ENCODE measurements at regions of chr10 and their contacts with region 1.

Region 1: DNA sequence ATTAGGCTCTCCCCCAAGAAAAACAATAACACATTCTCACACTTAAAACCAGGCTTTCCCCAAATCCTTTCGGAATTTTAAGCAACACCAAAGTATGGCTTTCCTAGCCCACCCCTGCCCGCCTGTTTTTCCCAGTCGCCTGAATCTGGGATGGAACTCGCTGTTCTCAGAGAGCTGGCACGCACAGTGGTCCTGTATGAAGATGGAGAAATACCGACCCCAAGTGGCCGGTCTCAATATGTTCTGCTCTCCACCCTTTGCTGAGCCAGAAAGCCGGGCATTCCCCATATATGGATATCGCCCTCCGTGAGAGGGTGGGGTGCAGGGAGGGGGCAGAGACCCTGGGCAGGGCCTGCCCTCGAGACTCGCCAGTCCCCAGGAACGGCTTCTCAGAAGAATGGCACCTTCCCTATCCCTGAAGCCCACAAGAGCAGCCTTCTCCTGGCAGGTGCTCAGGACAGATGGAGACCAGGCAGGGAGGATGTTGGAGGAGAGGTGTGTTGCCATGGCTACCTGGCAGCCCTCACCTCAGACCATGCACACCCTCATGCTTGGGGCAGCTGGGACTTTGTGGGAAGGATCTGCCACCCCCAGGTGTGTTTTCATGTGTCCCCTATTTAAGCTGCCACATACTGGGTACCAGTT is 3.4 kb downstream of the TACR2 start:
- DNase-seq: peak; percentile 83 to 88
- H3K4me3 ChIP-seq: no peak overlapping the region
- H3K27ac ChIP-seq: peak overlapping the region; percentile 98 to 99
- H3K4me1 ChIP-seq: peaks cover 2 to 11% of the 10 kb centered on the region in 2 donors
- H3K27me3 ChIP-seq: no peaks in the 10 kb centered on the region
- CTCF ChIP-seq: peak; percentile 80 to 93 (median 86)
- POLR2A ChIP-seq: no peak

Region 2: GRCh38 chr10:69639291-69640195 is 226.2 kb after region 1 on chr10:
- intact Hi-C with region 1: loop called (anchors 10 kb)
- DNase-seq: peak; percentile 46 to 49
- H3K4me3 ChIP-seq: no peak overlapping the region
- H3K27ac ChIP-seq: no peak overlapping the region
- H3K4me1 ChIP-seq: no peaks in the 10 kb centered on the region
- H3K27me3 ChIP-seq: no peaks in the 10 kb centered on the region
- CTCF ChIP-seq: peak; percentile 65 to 81 (median 74)
- POLR2A ChIP-seq: no peak

Region 3: GRCh38 chr10:69819716-69820506 is 406.6 kb after region 1 on chr10:
- intact Hi-C with region 1: no loop called
- DNase-seq: no peak
- H3K4me3 ChIP-seq: no peak overlapping the region
- H3K27ac ChIP-seq: no peak overlapping the region
- H3K4me1 ChIP-seq: no peaks in the 10 kb centered on the region
- H3K27me3 ChIP-seq: no peaks in the 10 kb centered on the region
- CTCF ChIP-seq: no peak
- POLR2A ChIP-seq: no peak

Measured in uterus (tissue), 4 donors.